Ascending aorta (tissue), 2 donors: ENCODE measurements at regions of chr11 and their contacts with region 1.

Region 1: GRCh38 chr11:19595840-19596751 is 116.5 kb upstream of the NAV2 start:
- DNase-seq: peak; percentile 64 to 95
- H3K4me3 ChIP-seq: peak overlapping the region in 1 of 2 donors; percentile 60
- H3K27ac ChIP-seq: peak overlapping the region; percentile 82 to 93
- H3K4me1 ChIP-seq: peaks cover 18 to 46% of the 10 kb centered on the region in 2 donors
- H3K27me3 ChIP-seq: no peaks in the 10 kb centered on the region
- CTCF ChIP-seq: no peak

Region 2: DNA sequence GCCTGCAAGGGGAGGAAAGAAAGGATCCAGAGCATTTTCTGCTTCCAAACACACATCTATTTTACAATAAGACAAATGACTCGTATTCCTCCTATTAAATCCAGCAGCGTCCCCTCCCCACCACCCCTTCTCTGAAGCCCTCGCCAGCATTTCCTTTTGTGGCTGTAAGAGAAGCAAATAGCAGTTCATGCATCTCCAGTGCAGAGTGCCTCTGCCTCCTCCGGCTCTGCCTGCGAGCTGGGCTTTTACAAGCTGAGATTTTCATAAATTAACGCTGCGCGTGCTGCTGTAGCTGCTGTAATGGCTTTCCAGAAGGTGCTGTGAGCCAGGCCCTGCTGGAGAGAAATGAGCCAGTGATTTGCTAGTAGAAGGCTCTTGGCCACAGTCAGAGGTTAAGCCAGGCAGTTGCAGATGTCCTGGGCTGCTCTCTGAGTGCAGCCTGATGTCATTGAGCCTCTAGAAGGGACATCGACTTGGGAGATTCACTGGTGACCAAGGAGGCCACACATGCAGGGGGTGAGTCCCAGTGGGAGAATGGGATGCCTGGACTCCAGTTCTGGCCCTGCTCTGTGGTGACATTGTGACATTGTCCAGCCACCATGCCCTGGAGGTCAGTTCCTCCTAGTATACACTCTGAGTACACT is 18.0 kb before region 1 on chr11:
- intact Hi-C with region 1: loop called (anchors 1 kb)
- DNase-seq: peak in 1 of 2 donors; percentile 91
- H3K4me3 ChIP-seq: peak overlapping the region in 1 of 2 donors; percentile 52
- H3K27ac ChIP-seq: peak overlapping the region; percentile 93 to 98
- H3K4me1 ChIP-seq: peaks cover 43 to 72% of the 10 kb centered on the region in 2 donors
- H3K27me3 ChIP-seq: no peaks in the 10 kb centered on the region
- CTCF ChIP-seq: peak in 1 of 3 experiments; percentile 29

Region 3: DNA sequence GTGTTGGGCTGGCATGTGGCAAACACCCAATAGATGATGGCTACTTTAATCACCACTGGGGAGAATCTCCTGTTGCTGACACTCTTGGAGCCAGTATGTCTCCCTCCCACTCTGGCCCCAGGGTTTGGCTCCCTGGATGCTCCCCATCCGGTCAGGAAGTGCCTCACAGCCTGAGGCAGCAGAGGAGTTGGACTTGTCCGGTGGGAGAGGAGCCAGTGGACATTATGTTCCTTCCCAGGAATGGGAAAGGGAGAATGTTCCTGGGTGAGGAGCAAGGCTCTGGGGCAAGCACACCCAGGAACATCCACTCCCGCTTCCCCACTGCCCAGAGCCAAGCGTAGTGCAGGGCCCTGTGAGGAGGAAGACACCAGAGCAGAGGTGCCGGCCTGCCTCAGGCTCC is 31.9 kb after region 1 on chr11:
- intact Hi-C with region 1: loop called (anchors 1 kb)
- DNase-seq: peak; percentile 58 to 96
- H3K4me3 ChIP-seq: no peak overlapping the region
- H3K27ac ChIP-seq: peak overlapping the region; percentile 84 to 87
- H3K4me1 ChIP-seq: peaks cover 12 to 46% of the 10 kb centered on the region in 2 donors
- H3K27me3 ChIP-seq: no peaks in the 10 kb centered on the region
- CTCF ChIP-seq: no peak

Region 4: DNA sequence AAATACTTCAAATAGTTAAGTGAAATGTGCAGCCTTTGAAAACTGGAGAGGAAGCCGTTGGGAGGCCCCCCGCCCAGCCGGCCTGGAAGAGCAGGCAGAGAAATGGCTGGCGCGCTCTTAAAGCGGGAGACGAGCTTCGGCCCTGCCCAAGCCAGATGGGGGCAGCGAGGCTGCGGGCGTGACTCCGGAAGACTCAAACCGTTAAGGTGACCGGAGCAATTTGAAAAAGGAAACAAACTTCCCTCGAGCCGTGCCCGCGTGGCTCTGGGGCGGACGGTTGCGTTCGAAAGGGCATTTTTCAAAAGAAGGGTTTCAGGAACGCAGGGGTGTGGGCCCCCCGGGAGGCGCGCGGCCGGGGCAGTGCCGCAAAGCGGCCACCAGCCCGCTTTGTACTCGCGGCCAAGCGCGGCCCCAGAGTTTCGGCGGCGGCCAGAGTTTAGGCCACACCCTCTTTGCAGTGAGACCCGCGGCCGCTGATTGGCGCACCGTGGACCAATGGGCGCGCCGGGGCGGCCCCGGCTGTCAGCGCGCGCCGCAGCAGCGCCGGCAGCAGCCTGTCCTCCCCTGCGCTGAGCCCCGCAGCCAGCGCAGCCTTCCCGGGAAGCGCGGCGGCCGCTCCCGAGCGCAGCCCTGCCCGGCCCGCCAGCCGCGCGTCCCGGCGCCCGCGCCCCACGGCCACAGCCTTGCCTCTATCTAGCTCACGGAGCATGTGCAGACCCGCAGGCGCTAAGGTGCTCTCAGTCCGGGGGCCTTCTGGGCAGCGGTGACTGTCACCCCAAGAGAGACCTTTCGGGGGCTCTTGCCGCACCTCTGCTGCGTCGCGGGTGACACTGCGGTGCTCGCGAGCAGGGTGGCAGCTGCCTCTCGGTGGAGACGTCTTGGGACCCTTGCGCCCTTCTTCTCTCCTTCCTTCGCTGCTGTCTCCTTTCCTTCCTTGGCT is 116.5 kb after region 1 on chr11 and contains the start of gene NAV2:
- intact Hi-C with region 1: loop called (anchors 1 kb)
- DNase-seq: peak; percentile 80 to 95
- H3K4me3 ChIP-seq: peak within 1 kb of the TSS; percentile 92 to 98
- H3K27ac ChIP-seq: peak within 1 kb of the TSS; percentile 97 to 98
- H3K4me1 ChIP-seq: peaks cover 0 to 16% of the 10 kb centered on the region in 2 donors
- H3K27me3 ChIP-seq: no peaks in the 10 kb centered on the region
- CTCF ChIP-seq: peak in 1 of 3 experiments; percentile 9
- total RNA-seq, gene NAV2: 62.6 TPM